H1 (cell line): ENCODE measurements at regions of chr1 and their contacts with region 1.

Region 1: DNA sequence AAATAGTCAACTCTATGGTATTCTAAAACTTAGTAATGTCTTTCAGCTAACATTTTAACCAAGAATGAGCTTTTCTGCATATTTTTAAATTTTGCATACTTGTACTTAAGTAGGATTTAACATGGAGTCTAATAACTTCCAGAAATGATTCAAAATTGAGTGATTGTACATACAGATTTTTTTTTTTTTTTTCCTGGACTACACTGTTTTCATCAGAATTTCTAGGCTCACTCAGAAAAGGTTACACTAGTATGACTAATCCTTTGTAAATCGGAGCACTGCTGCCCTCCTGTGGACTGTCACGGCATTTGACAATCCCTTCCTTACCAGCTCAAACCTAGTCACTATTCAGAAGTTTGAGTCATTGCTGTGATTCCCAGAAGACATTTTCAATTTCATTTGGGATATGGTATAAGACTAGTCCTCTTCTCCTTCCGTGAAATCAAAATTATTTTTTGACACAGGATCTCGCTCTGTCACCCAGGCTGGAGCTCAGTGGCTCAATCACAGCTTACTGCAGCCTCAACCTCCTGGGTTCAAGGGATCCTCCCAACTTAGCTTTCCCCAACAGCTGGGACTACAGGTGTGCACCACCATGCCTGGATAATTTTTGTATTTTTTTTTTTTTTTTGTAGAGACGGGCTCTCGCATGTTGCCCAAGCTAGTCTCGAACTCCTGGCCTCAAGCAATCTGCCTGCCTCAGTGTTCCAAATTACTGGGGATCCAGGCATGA is 45.5 kb downstream of the CD46 start:
- DNase-seq: peak; percentile 31 to 78
- H3K4me3 ChIP-seq: no peak overlapping the region
- H3K27ac ChIP-seq: no peak overlapping the region
- H3K4me1 ChIP-seq: peaks cover 0 to 2% (median 0%) of the 10 kb centered on the region in 4 experiments; a peak in 1 of 7 replicates
- H3K27me3 ChIP-seq: no peaks in the 10 kb centered on the region
- CTCF ChIP-seq: peak; percentile 41 to 83 (median 72)
- EP300 ChIP-seq: no peak
- POLR2A ChIP-seq: no peak
- RAD21 ChIP-seq: peak; percentile 69 to 72

Region 2: DNA sequence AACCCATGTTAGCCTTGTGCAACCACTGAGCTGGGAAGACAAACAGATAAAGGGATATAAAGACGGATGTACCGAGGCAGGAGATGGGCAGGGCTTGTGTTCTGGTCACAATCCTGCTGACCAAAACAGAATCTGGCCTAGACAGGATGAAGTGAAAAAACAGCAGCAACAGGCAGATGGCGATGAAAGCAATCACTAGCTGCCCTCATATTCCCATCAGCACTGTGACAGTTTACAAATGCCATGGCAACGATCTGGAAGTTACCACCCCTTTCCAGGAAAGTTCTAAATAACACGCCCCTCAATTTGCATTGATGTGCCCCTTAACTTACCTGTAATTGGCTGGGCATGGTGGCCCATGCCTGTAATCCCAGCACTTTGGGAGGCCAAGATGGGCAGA is 86.1 kb before region 1 on chr1:
- CTCF ChIA-PET with region 1: interaction called, 11 read pairs
- POLR2A ChIA-PET with region 1: interaction called, 4 read pairs
- DNase-seq: peak in 1 of 2 experiments; percentile 9
- H3K4me3 ChIP-seq: no peak overlapping the region
- H3K27ac ChIP-seq: no peak overlapping the region
- H3K4me1 ChIP-seq: no peaks in the 10 kb centered on the region
- H3K27me3 ChIP-seq: no peaks in the 10 kb centered on the region
- CTCF ChIP-seq: peak in 2 of 3 experiments; percentile 1 to 50; a peak in 3 of 4 replicates
- EP300 ChIP-seq: no peak
- POLR2A ChIP-seq: no peak
- RAD21 ChIP-seq: peak; percentile 41 to 53

Region 3: GRCh38 chr1:207779008-207779407 is 18.4 kb before region 1 on chr1:
- CTCF ChIA-PET with region 1: interaction called, 19 read pairs
- POLR2A ChIA-PET with region 1: interaction called, 3 read pairs
- DNase-seq: no peak
- H3K4me3 ChIP-seq: no peak overlapping the region
- H3K27ac ChIP-seq: no peak overlapping the region
- H3K4me1 ChIP-seq: no peaks in the 10 kb centered on the region
- H3K27me3 ChIP-seq: no peaks in the 10 kb centered on the region
- CTCF ChIP-seq: no peak
- EP300 ChIP-seq: no peak
- POLR2A ChIP-seq: no peak
- RAD21 ChIP-seq: no peak